Dorsolateral prefrontal cortex (tissue), 120 donors: ENCODE measurements at regions of chr19 and their contacts with region 1.

Region 1: DNA sequence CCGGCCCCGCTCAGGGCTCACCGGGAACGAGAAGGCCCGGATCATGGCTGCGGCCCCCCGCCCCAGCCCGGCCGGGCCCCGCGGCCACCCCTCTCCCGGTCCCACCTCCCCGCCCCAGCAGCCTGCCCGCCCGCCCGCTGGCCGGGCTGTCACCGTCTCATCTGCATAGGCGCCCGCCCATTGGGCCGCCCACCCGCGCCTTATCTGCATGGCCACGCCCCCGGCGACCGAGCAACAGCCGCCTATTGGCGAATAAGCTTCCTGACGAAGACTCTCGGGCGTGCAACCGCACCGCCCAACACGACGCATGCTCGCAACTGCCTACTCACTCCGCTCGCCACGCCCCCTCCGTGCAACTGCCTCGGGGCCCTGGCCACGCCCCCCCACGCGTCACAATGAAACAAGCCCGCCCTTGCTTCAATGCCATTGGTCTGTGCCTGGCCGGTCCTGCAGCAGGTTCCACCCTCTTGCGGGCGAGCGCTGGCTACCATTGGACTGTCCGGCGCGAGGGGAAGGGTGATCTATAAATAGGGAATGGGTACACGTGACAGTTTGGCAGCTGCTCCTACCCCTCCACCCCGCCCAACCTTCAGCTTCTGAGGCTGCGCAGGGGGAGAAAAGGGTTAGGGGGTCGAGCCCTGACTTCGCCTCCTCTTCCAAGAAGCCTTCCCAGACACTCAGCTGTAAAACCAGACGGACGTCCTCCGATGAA is at the start of gene DACT3:
- DNase-seq: peak; percentile 100
- H3K4me3 ChIP-seq: peak within 1 kb of the TSS; percentile 64 to 99 (median 93)
- H3K27ac ChIP-seq: peak within 1 kb of the TSS; percentile 84 to 99 (median 96)
- H3K27me3 ChIP-seq: no peaks in the 10 kb centered on the region
- CTCF ChIP-seq: peak in 20 of 56 donors; percentile 5 to 49 (median 22)
- total RNA-seq, gene DACT3: 57.1 to 95.2 (median 76.6) TPM

Region 2: DNA sequence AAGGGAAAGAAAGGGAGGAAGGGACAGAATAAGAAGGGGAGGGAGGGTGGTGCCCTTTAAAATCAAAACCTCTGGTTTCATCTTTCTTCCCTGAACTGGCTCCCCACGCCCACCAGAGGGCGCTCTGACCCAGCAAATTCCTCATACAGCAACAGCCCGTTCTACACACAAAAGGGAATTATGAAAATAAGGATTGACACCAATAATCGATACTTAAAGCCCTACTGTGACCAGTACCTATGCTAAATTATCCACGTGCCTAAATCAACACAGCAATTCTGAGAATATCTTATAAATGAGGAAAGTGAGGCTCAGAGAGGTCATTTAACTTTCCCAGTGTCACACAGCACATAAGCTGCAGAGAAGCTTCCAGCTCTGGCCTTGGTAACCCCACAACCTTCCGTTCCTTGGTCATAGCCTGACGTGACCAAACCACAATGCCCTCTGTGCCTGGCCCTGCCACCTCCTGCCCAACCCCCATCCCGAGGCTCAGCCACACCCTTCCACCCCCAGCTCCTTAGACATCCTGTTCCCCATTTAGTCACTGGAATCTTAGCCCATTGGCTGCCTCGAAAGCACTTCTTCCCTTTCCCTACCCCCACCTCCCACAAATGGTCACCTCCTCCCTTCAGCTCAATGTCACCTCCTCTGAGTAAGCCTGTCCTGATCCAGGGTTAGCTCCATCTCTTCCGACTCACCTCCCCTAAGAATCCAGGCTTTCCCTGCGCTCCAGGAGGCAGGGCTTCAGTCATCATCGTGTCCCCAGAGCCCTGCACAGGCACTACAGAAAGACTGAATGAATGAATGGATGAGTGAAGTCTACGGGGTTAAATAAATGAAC is 131.3 kb before region 1 on chr19:
- intact Hi-C with region 1: loop called (anchors 5 kb)
- DNase-seq: peak; percentile 51 to 85 (median 73)
- H3K4me3 ChIP-seq: peak overlapping the region in 38 of 59 donors; percentile 0 to 52 (median 26)
- H3K27ac ChIP-seq: peak overlapping the region in 19 of 59 donors; percentile 1 to 71 (median 29)
- H3K27me3 ChIP-seq: no peaks in the 10 kb centered on the region
- CTCF ChIP-seq: peak; percentile 90 to 99 (median 96)

Region 3: DNA sequence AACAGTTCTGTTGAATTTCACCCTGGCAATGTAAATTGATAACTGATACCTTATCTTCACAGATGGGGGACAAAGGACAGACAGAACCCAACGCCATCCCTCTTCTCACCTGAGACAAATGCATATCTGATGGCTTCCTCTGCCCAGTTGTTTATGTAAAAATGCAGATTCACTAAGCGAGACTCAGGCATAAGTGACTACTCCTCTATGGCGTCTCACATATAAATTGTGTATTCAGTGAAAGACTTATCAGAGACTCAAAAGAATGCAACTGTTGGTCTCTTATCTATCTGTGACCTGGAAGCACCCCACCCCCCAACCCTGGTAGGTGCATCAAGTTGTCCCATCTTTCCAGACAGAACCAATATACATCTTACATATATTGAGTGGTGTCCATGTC is 73.3 kb before region 1 on chr19:
- intact Hi-C with region 1: no loop called
- DNase-seq: no peak
- H3K4me3 ChIP-seq: no peak overlapping the region
- H3K27ac ChIP-seq: no peak overlapping the region
- H3K27me3 ChIP-seq: no peaks in the 10 kb centered on the region
- CTCF ChIP-seq: no peak

Region 4: GRCh38 chr19:46600384-46601317 is 60.5 kb before region 1 on chr19:
- intact Hi-C with region 1: loop called in 1 of 2 experiments (anchors 1 kb)
- DNase-seq: peak; percentile 93 to 97 (median 96)
- H3K4me3 ChIP-seq: peak overlapping the region; percentile 73 to 100 (median 99)
- H3K27ac ChIP-seq: peak overlapping the region; percentile 89 to 100 (median 100)
- H3K27me3 ChIP-seq: no peaks in the 10 kb centered on the region
- CTCF ChIP-seq: peak in 10 of 56 donors; percentile 2 to 32 (median 12)

Region 5: DNA sequence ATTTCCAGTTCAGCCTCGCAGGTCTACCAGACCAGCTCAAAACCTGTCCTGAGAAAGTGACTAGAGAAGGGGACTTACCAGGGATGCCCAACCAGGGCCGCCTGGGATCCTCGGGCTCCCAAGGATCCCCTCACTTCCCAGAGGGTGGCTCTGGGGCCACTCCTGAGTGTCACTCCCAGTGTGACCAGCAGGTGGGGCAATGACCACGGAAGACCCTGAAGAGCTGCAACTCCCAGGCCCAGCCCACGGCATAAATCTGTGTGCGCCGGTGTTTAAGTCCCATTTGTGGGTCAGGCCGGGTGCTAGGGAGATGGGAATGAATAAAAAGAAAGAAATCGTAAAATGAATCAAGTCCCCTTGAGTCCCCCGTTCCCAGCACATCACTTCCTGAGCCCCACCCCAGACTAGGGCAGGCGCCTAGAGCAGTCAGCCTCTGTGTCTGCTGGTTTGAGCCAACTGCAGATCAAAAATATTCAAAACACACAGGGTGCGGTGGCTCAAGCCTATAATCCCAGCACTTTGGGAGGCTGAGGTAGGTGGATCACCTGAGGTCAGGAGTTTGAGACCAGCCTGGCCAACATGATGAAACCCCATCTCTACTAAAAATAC is 47.0 kb before region 1 on chr19:
- intact Hi-C with region 1: loop called (anchors 1 to 2 kb)
- DNase-seq: peak; percentile 85 to 91 (median 88)
- H3K4me3 ChIP-seq: peak overlapping the region in 3 of 59 donors; percentile 16 to 28 (median 22)
- H3K27ac ChIP-seq: peak overlapping the region in 33 of 59 donors; percentile 7 to 83 (median 51)
- H3K27me3 ChIP-seq: no peaks in the 10 kb centered on the region
- CTCF ChIP-seq: peak; percentile 76 to 98 (median 93)

Region 6: GRCh38 chr19:46728693-46729676 is 67.8 kb after region 1 on chr19:
- intact Hi-C with region 1: loop called in 1 of 2 experiments (anchors 5 kb)
- DNase-seq: peak; percentile 42 to 82 (median 76)
- H3K4me3 ChIP-seq: peak overlapping the region in 7 of 59 donors; percentile 5 to 16 (median 10)
- H3K27ac ChIP-seq: peak overlapping the region in 53 of 59 donors; percentile 3 to 85 (median 68)
- H3K27me3 ChIP-seq: no peaks in the 10 kb centered on the region
- CTCF ChIP-seq: peak; percentile 53 to 98 (median 91)